ENCODE measurements at regions of chr20 and their contacts with region 1.

Region 1: GRCh38 chr20:7094438-7094997 is 327.0 kb downstream of the BMP2 start:
- DNase-seq: peak in 5 of 10 donors; percentile 5 to 83 (median 47)

Region 2: DNA sequence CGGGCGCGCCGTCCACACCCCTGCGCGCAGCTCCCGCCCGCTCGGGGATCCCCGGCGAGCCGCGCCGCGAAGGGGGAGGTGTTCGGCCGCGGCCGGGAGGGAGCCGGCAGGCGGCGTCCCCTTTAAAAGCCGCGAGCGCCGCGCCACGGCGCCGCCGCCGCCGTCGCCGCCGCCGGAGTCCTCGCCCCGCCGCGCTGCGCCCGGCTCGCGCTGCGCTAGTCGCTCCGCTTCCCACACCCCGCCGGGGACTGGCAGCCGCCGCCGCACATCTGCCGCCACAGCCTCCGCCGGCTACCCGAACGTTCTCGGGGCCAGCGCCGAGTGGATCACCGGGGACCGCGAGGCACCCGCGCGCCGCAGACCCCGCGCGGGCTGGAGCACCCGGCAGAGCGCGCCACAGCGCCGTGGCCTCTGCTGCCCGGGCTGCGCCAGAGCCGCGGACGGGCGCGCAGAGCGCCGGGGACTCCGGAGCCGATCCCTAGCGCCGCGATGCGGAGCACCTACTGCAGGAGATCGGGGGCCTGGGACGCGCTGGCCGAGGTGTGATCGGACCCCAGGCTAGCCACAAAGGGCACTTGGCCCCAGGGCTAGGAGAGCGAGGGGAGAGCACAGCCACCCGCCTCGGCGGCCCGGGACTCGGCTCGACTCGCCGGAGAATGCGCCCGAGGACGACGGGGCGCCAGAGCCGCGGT is 326.8 kb before region 1 on chr20 and contains the start of gene BMP2:
- intact Hi-C with region 1: loop called (anchors 10 kb)
- DNase-seq: peak; percentile 32 to 92 (median 42)

Region 3: DNA sequence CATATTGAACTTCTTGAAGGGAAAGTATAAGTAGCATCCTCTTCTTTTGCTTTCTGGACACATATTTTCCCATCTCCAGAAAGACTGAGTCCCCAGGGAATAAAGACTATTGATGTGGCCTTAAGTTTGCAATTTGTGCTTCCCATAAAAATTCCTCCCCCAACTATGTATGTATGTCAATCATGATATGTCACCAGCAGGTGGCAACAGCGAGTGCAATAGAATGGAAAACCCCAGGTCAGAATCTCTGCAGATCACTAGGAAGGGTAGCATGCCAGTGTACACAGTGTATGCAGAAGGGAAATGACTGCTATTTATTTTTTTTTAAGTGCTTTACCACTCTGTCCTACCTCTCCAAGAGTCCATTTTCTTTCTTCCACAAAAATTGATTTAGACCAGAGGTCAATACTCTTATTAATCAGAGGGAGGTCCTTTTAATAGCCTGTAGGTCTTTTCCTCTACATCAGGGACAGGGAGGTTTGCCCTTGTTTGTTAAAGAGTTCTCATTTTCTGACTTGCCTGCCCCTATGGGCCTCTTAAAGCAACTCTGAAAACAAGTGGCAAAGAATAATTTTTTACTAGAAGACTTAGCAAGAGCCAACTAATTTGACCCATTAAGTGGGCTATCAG is 265.6 kb before region 1 on chr20:
- intact Hi-C with region 1: loop called (anchors 10 kb)
- DNase-seq: peak in 7 of 10 donors; percentile 43 to 84 (median 66)

Measured in posterior cingulate gyrus (tissue), 11 donors.